Activated B cell treated with CpG ODN at 0.5 μM for 24 hours (primary cell): ENCODE measurements at regions of chr1 and their contacts with region 1.

Region 1: DNA sequence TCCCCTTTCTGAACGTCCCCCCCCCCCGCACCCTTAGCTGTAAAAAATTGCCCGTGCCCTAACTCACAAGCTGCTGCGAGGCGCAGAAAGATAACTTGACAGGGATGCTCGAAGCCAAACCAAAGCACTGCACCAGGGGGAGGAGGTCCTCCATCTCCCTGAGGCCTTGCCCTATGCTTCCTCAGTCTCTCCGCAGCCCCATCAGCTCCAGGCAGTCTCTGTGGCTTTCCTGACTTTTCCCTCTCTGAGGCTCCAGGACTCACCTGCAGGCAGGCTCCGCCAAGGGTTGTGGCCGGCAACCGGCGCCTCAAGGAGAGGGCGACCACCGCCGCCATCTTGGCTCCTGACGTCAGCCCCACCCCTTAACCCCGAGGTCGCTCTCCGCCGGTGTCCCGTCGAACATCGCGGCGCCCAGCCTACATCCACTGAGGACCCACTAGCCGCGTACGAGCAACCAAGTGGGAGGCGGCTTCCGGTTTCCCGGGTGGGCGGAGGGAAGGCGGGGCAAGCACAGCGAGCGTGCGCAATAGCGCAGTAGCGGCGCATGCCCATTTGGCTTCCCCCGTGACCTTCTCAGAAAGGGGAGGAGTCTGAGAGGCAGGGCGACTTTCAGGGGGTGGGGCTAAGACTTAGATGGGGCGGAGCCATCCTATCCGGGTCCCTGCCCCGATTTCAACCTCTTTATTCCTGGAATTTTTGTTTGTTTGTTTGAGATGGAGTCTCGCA is at the start of gene SDHB:
- DNase-seq: peak; percentile 100
- ATAC-seq: peak; percentile 98
- H3K4me3 Mint-ChIP-seq: peak within 1 kb of the TSS; percentile 99
- H3K27ac Mint-ChIP-seq: peak within 1 kb of the TSS; percentile 94
- H3K4me1 Mint-ChIP-seq: peaks cover 25% of the 10 kb centered on the region
- H3K27me3 Mint-ChIP-seq: peaks cover 6% of the 10 kb centered on the region
- CTCF ChIP-seq: no peak
- total RNA-seq, gene SDHB: 70.7 and 78.3 TPM in 2 replicates

Region 2: DNA sequence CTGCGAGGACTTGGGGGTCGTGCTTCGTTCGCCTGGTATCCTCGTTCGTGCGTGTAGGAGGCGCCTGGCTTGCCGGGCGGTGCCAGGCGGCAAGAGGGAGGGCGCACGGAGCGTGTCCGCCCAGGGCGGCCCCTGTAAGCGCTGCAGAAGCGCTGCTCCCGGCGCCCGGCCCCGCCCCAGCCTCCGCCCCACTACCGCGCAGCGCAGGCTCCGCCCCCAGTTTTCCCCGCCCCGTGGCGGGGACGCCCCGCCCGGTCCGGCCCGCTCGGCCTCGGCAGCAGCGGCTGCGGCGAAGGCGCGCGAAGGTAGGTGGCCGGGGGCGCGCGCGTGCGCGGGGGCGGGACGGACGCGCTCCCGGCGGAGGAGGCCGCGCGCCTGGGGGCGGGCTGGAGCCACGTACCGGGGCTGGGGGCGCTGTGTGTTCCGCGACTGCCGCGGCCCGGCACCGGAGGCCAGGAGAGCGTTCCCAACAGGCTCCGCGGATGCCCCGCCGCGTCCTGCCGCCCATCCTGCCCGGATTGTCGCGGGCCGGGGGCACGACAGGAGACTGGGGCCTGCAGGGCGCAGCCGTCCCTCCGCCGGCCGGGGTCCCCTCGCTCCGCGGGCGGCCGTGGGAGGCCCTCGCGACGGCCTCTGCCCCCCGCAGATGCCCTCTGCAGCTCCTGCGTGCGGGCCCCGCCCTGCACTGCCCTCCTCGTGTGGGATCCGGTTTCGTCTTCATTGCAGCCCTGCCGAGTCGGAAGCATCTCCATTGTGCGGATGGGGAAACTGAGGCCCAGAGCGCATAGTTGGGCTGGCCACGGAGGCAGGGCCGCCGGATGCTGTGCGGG is 139.8 kb before region 1 on chr1:
- CTCF ChIA-PET with region 1: no interaction called
- POLR2A ChIA-PET with region 1: interaction called, 3 read pairs
- intact Hi-C with region 1: loop called (anchors 2 kb)
- DNase-seq: peak; percentile 89
- ATAC-seq: peak; percentile 98
- H3K4me3 Mint-ChIP-seq: peak overlapping the region; percentile 84
- H3K27ac Mint-ChIP-seq: peak overlapping the region; percentile 73
- H3K4me1 Mint-ChIP-seq: peaks cover 29% of the 10 kb centered on the region
- H3K27me3 Mint-ChIP-seq: no peaks in the 10 kb centered on the region
- CTCF ChIP-seq: no peak

Region 3: GRCh38 chr1:17011439-17012307 is 42.2 kb before region 1 on chr1 and contains the start of gene ATP13A2:
- CTCF ChIA-PET with region 1: no interaction called
- POLR2A ChIA-PET with region 1: no interaction called
- intact Hi-C with region 1: loop called (anchors 1 kb)
- DNase-seq: peak; percentile 87
- ATAC-seq: peak; percentile 99
- H3K4me3 Mint-ChIP-seq: peak within 1 kb of the TSS; percentile 81
- H3K27ac Mint-ChIP-seq: peak within 1 kb of the TSS; percentile 20
- H3K4me1 Mint-ChIP-seq: peaks cover 24% of the 10 kb centered on the region
- H3K27me3 Mint-ChIP-seq: no peaks in the 10 kb centered on the region
- CTCF ChIP-seq: no peak
- total RNA-seq, gene ATP13A2: 27.6 and 31.9 TPM in 2 replicates

Region 4: DNA sequence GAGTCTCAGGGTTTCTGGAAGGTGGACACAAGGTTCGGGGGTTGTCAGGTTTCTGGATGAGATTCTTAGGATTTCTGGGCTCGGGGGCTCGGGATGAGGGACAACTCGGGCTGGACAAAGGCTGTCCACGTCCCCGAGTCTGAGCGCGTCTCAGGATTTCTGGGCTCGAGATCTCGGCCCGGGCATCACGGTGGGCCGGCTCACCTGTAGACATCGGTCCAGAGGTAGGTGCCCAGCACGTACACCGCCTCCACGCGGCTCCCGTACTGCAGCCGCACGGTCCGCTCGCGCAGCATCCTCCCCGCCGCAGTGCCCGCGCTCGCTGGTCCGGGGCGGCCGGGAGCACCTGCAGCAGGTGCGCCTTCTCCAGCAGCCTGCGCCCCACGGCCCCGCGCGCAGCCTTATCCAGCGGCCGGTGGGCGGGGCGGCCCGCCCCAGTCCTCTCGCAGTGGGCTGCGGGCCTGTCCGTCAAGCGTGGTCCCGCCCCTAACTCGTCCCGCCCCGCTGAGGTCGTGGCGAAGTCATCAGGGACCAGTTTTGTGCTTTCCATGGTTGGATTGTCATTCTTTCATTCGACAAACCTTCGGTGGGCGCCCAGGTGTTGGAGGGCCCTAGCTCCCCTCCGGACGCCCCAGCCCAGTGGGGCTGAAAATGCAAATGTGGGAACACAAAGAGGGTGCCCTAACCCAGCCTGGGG is 65.4 kb after region 1 on chr1 and contains the start of gene PADI2:
- CTCF ChIA-PET with region 1: no interaction called
- POLR2A ChIA-PET with region 1: no interaction called
- intact Hi-C with region 1: loop called (anchors 1 kb)
- DNase-seq: peak; percentile 69
- ATAC-seq: peak; percentile 87
- H3K4me3 Mint-ChIP-seq: peak within 1 kb of the TSS; percentile 79
- H3K27ac Mint-ChIP-seq: peak within 1 kb of the TSS; percentile 35
- H3K4me1 Mint-ChIP-seq: peaks cover 34% of the 10 kb centered on the region
- H3K27me3 Mint-ChIP-seq: peaks cover 13% of the 10 kb centered on the region
- CTCF ChIP-seq: no peak
- total RNA-seq, gene PADI2: 7.2 and 9.9 TPM in 2 replicates